ENCODE measurements at regions of chr16 and their contacts with region 1.

Region 1: GRCh38 chr16:50741808-50742575 is at the start of gene CYLD:
- DNase-seq: peak; percentile 100
- H3K4me3 Mint-ChIP-seq: peak within 1 kb of the TSS; percentile 90
- H3K27ac Mint-ChIP-seq: peak within 1 kb of the TSS; percentile 96
- H3K4me1 Mint-ChIP-seq: peaks cover 42% of the 10 kb centered on the region
- H3K27me3 Mint-ChIP-seq: no peaks in the 10 kb centered on the region
- total RNA-seq, gene CYLD: 70.8 to 71.9 TPM

Region 2: GRCh38 chr16:49755313-49755620 is 986.7 kb before region 1 on chr16:
- CTCF ChIA-PET with region 1: no interaction called
- intact Hi-C with region 1: no loop called
- DNase-seq: no peak
- H3K4me3 Mint-ChIP-seq: no peak overlapping the region
- H3K27ac Mint-ChIP-seq: no peak overlapping the region
- H3K4me1 Mint-ChIP-seq: peaks cover 10% of the 10 kb centered on the region
- H3K27me3 Mint-ChIP-seq: peaks cover 20% of the 10 kb centered on the region

Region 3: DNA sequence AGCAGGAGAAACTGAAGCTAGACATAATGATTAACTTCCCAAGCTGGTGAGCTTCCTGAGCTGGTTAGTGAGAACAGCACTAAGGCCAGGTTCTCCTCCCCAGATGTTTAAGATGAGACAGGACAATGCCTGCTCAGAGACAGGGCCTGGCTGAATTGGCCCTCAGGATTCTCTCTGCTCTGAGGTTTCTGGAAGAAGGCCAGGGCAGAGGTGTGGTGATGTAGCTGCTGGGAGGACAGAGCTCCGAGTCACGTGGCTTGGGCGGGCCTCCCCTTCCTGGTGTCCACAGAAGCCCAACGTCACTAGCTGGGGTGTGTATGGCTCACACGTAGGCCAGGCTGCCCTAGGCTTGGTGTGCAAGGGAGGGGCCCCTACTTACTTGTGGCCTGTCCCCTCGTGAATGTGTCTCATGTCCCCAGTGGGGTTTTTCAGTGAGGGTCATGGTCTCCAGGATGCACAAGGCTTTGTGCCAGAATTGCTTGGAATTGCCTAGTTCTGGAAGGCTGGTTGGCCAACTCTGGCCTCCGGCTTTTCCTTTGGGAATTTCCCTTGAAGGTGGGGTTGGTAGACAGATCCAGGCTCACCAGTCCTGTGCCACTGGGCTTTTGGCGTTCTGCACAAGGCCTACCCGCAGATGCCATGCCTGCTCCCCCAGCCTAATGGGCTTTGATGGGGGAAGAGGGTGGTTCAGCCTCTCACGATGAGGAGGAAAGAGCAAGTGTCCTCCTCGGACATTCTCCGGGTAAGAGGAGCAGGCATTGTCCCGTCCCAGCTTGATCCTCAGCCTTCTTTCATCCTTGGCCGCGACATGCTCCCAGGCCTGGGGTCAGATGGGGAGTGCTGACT is 45.2 kb before region 1 on chr16:
- CTCF ChIA-PET with region 1: interaction called, 6 read pairs
- intact Hi-C with region 1: loop called (anchors 1 kb)
- DNase-seq: peak; percentile 46
- H3K4me3 Mint-ChIP-seq: no peak overlapping the region
- H3K27ac Mint-ChIP-seq: peak overlapping the region; percentile 34
- H3K4me1 Mint-ChIP-seq: peaks cover 73% of the 10 kb centered on the region
- H3K27me3 Mint-ChIP-seq: no peaks in the 10 kb centered on the region

Region 4: DNA sequence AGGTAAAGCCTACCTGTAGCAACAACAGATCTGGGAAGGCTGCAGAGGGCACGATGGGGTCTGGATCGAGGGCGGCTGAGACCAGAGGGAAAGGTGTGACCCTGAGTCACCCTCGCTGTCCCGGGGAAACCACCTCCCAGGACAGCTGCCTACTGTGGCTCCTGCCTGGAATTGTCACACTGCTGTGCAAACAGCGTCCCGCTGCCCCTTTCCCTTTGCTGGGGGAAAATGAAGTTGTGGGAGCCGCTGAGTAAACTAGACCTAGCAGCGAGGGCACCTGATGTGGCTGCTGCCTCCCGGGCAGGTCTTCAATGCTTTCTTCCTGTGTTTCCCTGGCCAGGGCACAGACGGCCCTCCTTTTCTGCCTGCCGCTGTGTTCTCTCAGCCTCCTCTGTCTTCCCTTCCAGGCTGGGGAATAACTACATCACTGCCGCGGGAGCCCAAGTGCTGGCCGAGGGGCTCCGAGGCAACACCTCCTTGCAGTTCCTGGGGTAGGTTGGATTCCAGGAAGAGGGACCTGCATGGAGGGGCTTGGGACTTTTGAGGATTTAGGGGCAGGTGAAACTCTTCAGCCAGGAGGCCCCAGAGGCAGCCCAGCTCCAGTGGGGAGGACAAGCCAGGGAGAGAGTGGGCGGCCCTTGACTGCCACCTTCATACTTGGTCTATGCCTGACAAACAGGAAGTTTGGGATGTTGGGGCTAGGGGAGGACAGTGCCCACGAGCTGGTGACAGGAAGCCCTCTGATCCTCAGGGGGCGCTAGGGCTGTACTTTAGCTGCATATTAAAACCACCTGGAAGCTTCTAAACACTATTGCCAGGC is 22.3 kb before region 1 on chr16:
- CTCF ChIA-PET with region 1: interaction called, 5 read pairs
- intact Hi-C with region 1: loop called (anchors 1 kb)
- DNase-seq: peak; percentile 50
- H3K4me3 Mint-ChIP-seq: no peak overlapping the region
- H3K27ac Mint-ChIP-seq: no peak overlapping the region
- H3K4me1 Mint-ChIP-seq: peaks cover 35% of the 10 kb centered on the region
- H3K27me3 Mint-ChIP-seq: no peaks in the 10 kb centered on the region

Region 5: DNA sequence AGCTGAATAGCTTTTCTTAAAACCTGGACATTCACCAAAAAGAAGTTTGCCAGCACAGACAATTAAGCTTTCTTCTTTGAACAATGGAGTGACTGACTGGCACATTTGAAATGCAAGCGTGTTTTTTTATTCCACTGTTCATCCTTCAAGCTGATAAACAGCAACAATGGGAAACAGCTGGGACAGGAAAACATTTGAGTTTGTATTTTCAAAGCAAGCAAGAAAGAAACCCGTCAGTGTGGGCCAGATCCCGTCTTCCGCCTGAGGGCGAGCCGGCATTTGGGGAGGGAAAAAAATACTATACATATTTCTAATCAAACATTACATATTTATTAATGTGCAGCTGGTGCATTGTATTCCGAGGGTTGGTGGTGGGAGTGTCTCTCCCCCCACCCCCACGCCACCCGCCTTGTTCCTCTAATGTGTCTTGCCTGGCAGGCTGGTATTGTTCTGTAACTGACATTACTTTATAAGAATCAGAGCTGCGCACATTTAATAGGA is 94.2 kb after region 1 on chr16:
- CTCF ChIA-PET with region 1: no interaction called
- intact Hi-C with region 1: no loop called
- DNase-seq: no peak
- H3K4me3 Mint-ChIP-seq: no peak overlapping the region
- H3K27ac Mint-ChIP-seq: no peak overlapping the region
- H3K4me1 Mint-ChIP-seq: peaks cover 9% of the 10 kb centered on the region
- H3K27me3 Mint-ChIP-seq: peaks cover 9% of the 10 kb centered on the region

Region 6: DNA sequence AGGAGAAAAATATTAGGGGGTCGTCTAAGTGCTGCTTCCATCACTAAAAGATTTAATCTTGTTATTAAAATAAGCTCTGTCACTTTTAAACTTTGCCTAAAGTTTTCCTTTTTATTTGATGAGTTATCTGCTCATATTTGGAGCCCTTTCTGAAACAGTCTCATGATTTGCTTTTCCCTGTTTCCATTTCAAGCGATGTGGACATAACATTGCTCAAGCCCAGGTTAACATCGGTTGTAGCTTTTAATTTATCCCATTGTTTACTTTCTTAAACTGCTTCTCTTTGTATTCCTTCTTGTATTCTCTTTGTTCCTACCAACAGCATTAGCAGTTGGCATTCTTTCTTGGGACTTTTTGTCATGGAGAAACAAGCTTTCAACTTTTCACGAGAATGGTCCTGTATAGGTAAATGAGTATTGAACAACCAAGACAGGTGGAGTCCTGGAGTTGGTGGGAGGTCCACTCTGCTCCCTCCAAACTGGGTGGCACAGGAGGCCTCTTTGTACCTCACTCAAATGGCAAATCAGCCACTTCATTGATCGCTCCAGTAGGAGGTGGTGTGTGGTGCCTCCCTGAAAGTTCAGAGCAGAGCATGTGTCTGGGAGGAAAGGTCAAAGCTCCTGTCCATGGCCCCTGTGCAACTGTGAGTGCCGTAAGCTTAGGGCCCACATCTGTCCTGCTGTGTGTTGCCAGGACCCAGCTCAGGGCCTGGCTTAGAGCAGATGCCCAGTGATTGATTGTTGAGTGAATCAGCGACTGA is 106.9 kb after region 1 on chr16:
- CTCF ChIA-PET with region 1: no interaction called
- intact Hi-C with region 1: no loop called
- DNase-seq: no peak
- H3K4me3 Mint-ChIP-seq: no peak overlapping the region
- H3K27ac Mint-ChIP-seq: no peak overlapping the region
- H3K4me1 Mint-ChIP-seq: no peaks in the 10 kb centered on the region
- H3K27me3 Mint-ChIP-seq: no peaks in the 10 kb centered on the region

Region 7: DNA sequence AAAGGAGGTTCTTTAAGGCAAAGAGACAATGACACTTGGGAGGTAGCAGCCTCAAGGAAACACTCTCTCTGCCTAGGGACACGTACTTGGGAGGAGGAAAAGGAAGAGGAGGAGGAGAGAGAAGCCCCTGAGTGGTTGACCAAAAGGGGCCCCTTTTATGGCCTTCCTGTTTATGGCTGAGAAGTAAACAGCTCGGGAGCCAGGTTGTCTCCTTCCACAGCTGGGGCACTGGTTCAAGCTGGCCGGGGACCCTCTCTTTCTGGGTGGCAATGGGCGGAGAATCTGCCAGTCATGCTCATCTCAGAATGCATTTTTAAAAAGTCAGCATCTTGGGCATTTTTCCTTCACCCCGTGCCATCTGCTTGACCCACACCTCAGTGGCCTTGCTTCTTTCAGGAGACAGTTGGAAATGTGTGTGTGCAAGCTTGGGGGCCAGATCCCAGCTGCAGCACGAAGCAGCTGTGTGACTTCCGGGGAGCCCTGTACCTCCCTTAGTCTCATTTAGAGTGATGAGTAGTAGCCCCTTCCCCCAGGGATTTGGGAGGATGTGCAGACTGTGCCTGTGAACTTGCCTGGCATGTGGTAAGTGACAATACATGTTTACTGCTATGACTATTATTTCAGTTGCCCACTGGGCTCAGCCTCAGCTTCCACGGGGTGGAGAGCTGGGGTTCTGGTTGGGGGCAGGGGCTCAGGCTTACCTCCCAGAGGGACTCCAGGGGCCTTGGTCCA is 442.9 kb after region 1 on chr16:
- CTCF ChIA-PET with region 1: no interaction called
- intact Hi-C with region 1: no loop called
- DNase-seq: no peak
- H3K4me3 Mint-ChIP-seq: no peak overlapping the region
- H3K27ac Mint-ChIP-seq: no peak overlapping the region
- H3K4me1 Mint-ChIP-seq: no peaks in the 10 kb centered on the region
- H3K27me3 Mint-ChIP-seq: no peaks in the 10 kb centered on the region